AG04449 (cell line): ENCODE measurements at regions of chr9 and their contacts with region 1.

Region 1: DNA sequence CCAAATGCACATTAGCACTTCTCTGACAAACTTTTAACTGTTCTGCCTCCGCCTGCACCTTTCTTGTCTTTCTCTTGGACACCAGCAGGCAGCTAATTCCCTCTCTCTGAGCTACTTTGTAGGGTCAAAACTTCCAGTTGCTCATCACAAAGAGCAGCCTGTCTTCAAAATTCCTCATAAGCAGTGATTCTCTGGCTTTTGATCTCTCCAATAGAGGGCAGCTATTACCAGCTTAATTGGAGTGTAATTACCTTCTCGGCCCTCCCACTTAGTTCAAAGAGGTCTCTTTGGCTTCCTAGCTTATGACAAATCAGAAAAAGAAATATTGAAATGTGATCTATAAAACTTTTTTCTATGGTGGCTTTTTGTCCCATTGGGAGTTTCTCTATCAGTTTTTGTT is 43.6 kb upstream of the RAD23B start:
- DNase-seq: no peak
- H3K4me3 ChIP-seq: no peak overlapping the region
- CTCF ChIP-seq: no peak

Region 2: GRCh38 chr9:107227781-107228195 is 11.7 kb before region 1 on chr9:
- CTCF ChIA-PET with region 1: interaction called, 11 read pairs
- POLR2A ChIA-PET with region 1: no interaction called
- DNase-seq: no peak
- H3K4me3 ChIP-seq: no peak overlapping the region
- CTCF ChIP-seq: no peak

Region 3: DNA sequence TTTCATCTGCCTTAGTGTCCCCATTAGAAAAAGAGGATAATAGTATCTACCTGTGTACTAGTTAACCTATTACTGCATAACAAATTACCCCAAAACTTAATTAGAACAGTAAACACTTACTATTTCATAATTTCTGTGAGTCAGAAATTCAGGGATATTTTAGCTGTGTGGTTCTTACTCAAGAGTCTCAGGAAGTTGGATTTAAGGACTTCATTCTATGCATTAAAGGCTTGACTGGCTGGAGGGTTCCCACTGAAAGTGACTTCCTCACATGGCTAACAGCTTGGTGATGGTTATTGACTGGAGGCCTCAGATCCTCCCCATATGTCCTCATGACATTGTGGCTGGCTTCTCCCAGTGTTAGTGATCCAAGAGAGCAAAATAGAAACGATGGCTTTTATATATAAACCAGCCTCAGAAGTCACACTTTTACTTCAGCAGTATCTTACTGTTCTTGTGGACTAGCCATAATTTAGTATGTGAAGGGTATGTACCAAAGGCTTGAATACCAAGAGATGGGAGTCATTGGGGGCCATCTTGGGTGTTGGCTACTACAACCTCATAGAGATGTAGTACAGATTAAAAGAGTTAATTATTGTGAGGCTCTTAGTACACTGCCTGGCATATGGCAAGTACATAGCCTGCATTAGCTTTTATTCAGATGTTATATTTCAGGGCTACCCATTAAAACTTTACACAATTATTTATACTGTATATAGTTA is 53.5 kb after region 1 on chr9:
- CTCF ChIA-PET with region 1: no interaction called
- POLR2A ChIA-PET with region 1: no interaction called
- DNase-seq: no peak
- H3K4me3 ChIP-seq: no peak overlapping the region
- CTCF ChIP-seq: no peak